ENCODE measurements at regions of chr15 and their contacts with region 1.

Region 1: GRCh38 chr15:91942676-91943576 is 89.4 kb downstream of the SLCO3A1 start:
- DNase-seq: peak in 1 of 10 donors; percentile 36
- H3K4me3 ChIP-seq: peak overlapping the region in 22 of 59 donors; percentile 1 to 42 (median 17)
- H3K27ac ChIP-seq: peak overlapping the region in 41 of 59 donors; percentile 9 to 81 (median 46)
- H3K27me3 ChIP-seq: no peaks in the 10 kb centered on the region
- CTCF ChIP-seq: peak in 3 of 56 donors; percentile 10 to 15 (median 11)

Region 2: GRCh38 chr15:91302588-91303439 is 640.1 kb before region 1 on chr15:
- intact Hi-C with region 1: loop called in 1 of 2 experiments (anchors 10 kb)
- DNase-seq: peak in 4 of 10 donors; percentile 21 to 46 (median 34)
- H3K4me3 ChIP-seq: peak overlapping the region in 13 of 59 donors; percentile 1 to 43 (median 20)
- H3K27ac ChIP-seq: no peak overlapping the region
- H3K27me3 ChIP-seq: peaks cover 0 to 10% (median 0%) of the 10 kb centered on the region in 45 donors
- CTCF ChIP-seq: peak; percentile 51 to 90 (median 78)

Region 3: GRCh38 chr15:91627473-91628278 is 315.2 kb before region 1 on chr15:
- intact Hi-C with region 1: no loop called
- DNase-seq: peak in 3 of 10 donors; percentile 17 to 48 (median 40)
- H3K4me3 ChIP-seq: no peak overlapping the region
- H3K27ac ChIP-seq: peak overlapping the region in 5 of 59 donors; percentile 2 to 43 (median 37)
- H3K27me3 ChIP-seq: no peaks in the 10 kb centered on the region
- CTCF ChIP-seq: no peak

Region 4: GRCh38 chr15:91885714-91886270 is 57.1 kb before region 1 on chr15:
- intact Hi-C with region 1: loop called in 1 of 2 experiments (anchors 10 kb)
- DNase-seq: no peak
- H3K4me3 ChIP-seq: no peak overlapping the region
- H3K27ac ChIP-seq: peak overlapping the region in 58 of 59 donors; percentile 76 to 99 (median 94)
- H3K27me3 ChIP-seq: no peaks in the 10 kb centered on the region
- CTCF ChIP-seq: peak in 22 of 56 donors; percentile 0 to 34 (median 20)

Region 5: GRCh38 chr15:92226014-92226612 is 283.2 kb after region 1 on chr15:
- intact Hi-C with region 1: no loop called
- DNase-seq: peak in 3 of 10 donors; percentile 21 to 38 (median 24)
- H3K4me3 ChIP-seq: no peak overlapping the region
- H3K27ac ChIP-seq: no peak overlapping the region
- H3K27me3 ChIP-seq: peaks cover 0 to 12% (median 0%) of the 10 kb centered on the region in 45 donors
- CTCF ChIP-seq: peak; percentile 11 to 87 (median 66)